RWPE1 (cell line): ENCODE measurements at regions of chr9 and their contacts with region 1.

Region 1: DNA sequence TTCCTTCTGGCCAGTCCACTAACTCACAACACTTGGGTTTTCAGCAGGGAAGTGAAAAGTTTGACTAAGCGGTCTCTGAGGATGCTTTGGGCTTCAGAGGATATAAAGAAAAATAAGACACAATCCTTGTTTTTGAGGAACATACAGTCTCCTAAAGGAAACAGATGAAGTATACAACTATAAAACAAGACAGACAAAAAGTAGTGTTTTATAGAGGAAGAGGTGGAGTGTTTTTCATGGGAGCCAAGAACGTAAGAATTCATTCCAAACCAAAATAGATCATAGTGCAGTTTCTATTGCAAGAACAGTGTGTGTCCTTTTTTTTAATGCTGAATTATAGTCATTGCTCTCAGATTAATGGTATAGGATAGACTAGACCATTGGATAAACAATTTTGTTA is 586.9 kb upstream of the BRINP1 start:
- DNase-seq: no peak
- H3K27ac ChIP-seq: no peak overlapping the region
- CTCF ChIP-seq: no peak

Region 2: GRCh38 chr9:119639287-119639962 is 316.7 kb before region 1 on chr9:
- CTCF ChIA-PET with region 1: no interaction called
- POLR2A ChIA-PET with region 1: interaction called, 10 read pairs
- DNase-seq: no peak
- H3K27ac ChIP-seq: no peak overlapping the region
- CTCF ChIP-seq: no peak

Region 3: DNA sequence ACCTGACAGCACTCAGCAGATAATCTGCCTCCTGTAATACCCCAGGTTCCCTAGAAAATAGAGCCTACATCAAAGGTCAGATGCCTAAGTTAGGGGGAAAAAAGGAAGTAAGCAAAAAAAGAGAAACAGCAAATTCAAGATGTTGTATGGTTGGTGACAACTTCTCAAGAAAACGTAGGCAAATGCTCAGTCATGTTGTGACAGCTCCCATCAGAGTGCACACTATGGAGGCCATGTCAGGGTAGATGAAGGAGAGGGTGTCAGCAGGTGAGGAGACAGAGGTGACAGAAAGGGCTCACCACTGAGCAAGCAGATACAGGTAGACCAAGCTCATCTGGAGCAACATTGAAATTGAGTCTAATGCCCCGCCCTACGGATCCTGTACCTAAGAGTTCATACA is 230.1 kb before region 1 on chr9:
- CTCF ChIA-PET with region 1: no interaction called
- POLR2A ChIA-PET with region 1: no interaction called
- DNase-seq: no peak
- H3K27ac ChIP-seq: no peak overlapping the region
- CTCF ChIP-seq: no peak

Region 4: DNA sequence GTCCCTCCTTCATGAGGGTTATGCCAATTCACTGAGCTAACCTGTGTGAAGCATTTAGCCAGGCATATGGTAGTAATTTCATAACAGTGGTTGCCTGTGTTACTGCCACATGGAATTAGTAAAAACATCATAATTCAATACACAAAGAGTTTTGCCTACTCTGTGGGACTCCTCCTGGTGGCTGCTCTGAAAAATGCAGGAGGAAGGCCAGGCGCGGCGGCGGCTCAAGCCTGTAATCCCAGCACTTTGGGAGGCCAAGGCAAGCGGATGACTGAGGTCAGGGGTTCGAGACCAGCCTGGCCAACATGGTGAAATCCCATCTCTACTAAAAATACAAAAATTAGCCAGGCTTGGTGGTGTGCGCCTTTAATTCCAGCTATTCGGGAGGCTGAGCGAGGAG is 76.5 kb after region 1 on chr9:
- CTCF ChIA-PET with region 1: no interaction called
- POLR2A ChIA-PET with region 1: no interaction called
- DNase-seq: no peak
- H3K27ac ChIP-seq: no peak overlapping the region
- CTCF ChIP-seq: no peak

Region 5: GRCh38 chr9:120080849-120081248 is 124.7 kb after region 1 on chr9:
- CTCF ChIA-PET with region 1: no interaction called
- POLR2A ChIA-PET with region 1: no interaction called
- DNase-seq: no peak
- H3K27ac ChIP-seq: no peak overlapping the region
- CTCF ChIP-seq: no peak